RWPE1 (cell line): ENCODE measurements at regions of chr17 and their contacts with region 1.

Region 1: DNA sequence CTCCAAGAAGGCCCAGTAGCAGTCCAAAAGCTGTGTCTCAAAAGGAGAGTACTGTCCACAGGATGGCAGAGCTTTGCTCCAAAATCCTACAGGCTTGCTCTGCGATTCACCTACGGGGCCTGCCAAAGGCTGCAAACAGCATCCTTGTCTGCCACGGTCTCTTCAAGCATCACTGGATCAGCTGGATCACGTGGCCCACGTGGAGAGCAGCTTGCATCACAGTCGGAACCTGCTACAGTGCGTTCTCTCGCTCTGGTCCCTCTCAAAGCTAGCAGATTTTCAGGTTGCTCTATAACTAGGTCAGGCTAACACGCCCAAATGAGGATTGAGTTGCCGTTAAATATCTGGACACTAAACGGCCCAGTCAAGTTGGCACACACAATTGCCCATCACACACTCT is 8.4 kb upstream of the TIMM22 start:
- DNase-seq: no peak
- H3K27ac ChIP-seq: no peak overlapping the region
- CTCF ChIP-seq: no peak

Region 2: GRCh38 chr17:773467-774312 is 214.9 kb before region 1 on chr17:
- CTCF ChIA-PET with region 1: interaction called, 10 read pairs
- POLR2A ChIA-PET with region 1: no interaction called
- DNase-seq: no peak
- H3K27ac ChIP-seq: 0 out of 2 replicates have a peak overlapping the region, but pooled peaks have one; percentile 15
- CTCF ChIP-seq: no peak

Region 3: GRCh38 chr17:801660-802059 is 186.9 kb before region 1 on chr17:
- CTCF ChIA-PET with region 1: no interaction called
- POLR2A ChIA-PET with region 1: no interaction called
- DNase-seq: no peak
- H3K27ac ChIP-seq: peak overlapping the region; percentile 98
- CTCF ChIP-seq: no peak